RWPE1 (cell line): ENCODE measurements at regions of chr15 and their contacts with region 1.

Region 1: DNA sequence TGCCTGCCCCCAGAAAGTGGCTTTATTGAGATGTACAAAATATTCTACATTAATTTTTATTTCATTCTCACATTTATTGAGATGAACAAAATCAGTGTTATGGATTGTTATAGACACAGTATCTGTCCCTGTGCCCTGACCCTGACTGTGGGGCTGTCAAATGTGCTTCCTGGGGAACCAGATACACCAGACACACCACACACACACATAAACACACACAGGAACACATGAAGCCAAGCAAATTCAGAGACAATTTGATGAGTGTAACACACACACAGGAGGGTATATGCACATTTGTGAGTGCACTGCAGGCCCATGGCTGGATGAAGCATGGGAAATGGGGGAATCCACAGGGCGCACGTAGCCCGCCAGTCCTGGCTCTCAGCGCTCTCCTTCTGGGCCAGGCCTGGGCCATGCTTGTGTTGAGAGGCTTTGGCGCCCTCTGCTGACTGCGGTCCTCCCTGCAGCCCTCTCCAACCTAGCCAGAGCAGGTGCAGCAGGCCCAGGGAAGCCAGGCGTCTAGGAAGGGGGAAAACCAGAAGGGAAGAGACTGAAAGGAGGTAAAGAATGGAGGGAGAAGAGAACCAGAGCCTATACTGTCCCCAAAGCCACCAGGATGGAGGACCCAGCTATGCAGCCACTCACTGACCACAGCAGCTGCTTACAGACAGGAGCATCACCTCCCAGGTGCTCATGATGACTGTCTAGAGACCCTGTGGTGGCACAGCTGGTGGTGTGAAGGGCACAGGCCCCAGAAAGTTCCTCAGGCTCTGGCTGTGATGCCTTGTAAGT is 18.0 kb upstream of the LOXL1 start:
- DNase-seq: peak; percentile 72
- H3K27ac ChIP-seq: no peak overlapping the region
- CTCF ChIP-seq: peak; percentile 98

Region 2: DNA sequence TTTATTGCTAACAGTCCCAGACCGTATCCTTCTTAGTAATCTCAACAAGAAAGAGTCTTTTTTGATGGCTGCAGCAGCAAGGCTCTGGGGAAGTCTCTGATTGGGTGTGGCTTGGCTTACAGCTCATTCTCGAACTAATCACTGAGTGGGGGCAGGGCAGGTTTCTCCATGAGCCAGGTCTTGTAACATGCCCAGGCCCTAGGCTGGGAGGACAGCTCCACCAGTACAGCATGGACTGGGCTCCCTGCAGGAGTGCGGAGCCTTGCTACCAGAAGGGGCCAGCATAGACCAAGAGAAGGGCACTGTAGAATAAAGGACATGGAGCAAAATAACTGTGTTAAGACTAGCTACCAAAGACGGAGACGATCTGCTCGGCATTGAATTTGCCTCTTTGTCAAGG is 216.8 kb before region 1 on chr15:
- CTCF ChIA-PET with region 1: no interaction called
- POLR2A ChIA-PET with region 1: no interaction called
- DNase-seq: peak; percentile 69
- H3K27ac ChIP-seq: peak overlapping the region; percentile 39
- CTCF ChIP-seq: no peak

Region 3: GRCh38 chr15:73851689-73852088 is 56.5 kb before region 1 on chr15:
- CTCF ChIA-PET with region 1: no interaction called
- POLR2A ChIA-PET with region 1: no interaction called
- DNase-seq: peak; percentile 44
- H3K27ac ChIP-seq: no peak overlapping the region
- CTCF ChIP-seq: no peak

Region 4: DNA sequence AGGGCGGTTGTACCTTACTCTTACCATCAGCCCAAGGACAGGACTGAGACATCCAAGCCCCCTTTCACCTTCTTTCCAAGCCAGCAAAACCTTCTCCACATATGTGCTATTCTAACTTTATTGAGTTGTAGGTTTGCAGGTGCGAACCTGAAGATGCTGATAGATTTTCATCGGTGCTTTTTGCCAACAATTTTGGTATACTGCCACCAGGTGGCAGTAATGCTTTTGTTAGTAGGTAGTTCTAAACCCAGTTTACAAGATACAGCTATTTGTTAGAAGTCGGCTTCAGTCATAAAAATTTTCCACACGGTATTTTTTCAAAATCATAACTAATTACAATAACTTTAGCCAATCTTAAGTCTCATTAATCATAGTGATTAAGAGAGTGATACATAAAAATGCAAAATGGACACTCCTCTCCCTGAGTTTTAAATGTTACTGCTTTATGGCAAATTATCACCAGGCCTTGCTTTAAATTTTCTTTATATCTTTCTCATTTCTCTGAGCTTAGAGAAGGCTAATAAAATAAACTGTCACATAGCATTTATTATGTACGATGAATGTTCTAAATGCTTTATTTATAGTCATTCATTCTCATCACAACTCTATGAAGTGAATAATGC is 34.2 kb before region 1 on chr15:
- CTCF ChIA-PET with region 1: interaction called, 10 read pairs
- POLR2A ChIA-PET with region 1: no interaction called
- DNase-seq: peak; percentile 60
- H3K27ac ChIP-seq: no peak overlapping the region
- CTCF ChIP-seq: peak; percentile 74

Region 5: GRCh38 chr15:73897441-73898261 is 10.6 kb before region 1 on chr15:
- CTCF ChIA-PET with region 1: interaction called, 10 read pairs
- POLR2A ChIA-PET with region 1: no interaction called
- DNase-seq: peak; percentile 64
- H3K27ac ChIP-seq: no peak overlapping the region
- CTCF ChIP-seq: peak; percentile 75